Endothelial cell of umbilical vein (primary cell): ENCODE measurements at regions of chr10 and their contacts with region 1.

Region 1: GRCh38 chr10:79068562-79069324 is at the start of gene ZMIZ1:
- DNase-seq: peak; percentile 87
- H3K4me3 ChIP-seq: peak within 1 kb of the TSS; percentile 58 to 81 (median 73)
- H3K27ac ChIP-seq: peak within 1 kb of the TSS; percentile 69
- H3K4me1 ChIP-seq: peaks cover 30% of the 10 kb centered on the region
- H3K27me3 ChIP-seq: no peaks in the 10 kb centered on the region
- CTCF ChIP-seq: peak in 1 of 2 donors; percentile 15
- POLR2A ChIP-seq: peak; percentile 81
- total RNA-seq, gene ZMIZ1: 46.7 and 49.6 TPM in 2 replicates

Region 2: DNA sequence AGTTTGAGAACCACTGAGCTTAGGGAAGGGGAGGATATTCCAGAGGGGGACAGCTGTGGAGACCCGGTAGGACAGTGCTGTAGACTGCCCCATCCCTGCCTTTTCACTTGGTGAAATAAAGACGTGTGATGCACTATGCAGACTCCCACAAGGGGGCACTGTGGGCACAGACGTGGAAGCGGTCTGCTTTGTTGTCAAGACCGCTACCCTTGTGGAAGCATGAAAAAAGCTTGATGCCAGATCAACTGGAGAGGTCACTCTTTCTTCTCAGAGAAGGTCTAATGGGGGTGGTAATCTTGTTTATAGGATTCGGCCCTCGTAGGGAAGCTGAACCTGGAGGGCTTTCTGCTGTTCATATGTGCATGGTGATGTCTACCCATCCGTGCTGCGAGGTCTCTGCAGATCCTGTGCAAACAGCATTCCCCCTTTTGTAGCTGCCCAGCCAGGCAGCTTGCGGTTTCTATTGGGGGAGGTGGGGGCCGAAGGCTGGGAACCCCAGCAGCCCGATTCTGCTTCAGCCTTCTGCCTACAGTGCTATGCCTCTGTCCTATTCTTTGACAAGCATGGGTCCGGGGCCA is 1021.3 kb before region 1 on chr10:
- CTCF ChIA-PET with region 1: interaction called, 9 read pairs
- POLR2A ChIA-PET with region 1: no interaction called
- dilution Hi-C with region 1: no loop called
- intact Hi-C with region 1: loop called (anchors 5 kb)
- DNase-seq: peak; percentile 86
- H3K4me3 ChIP-seq: no peak overlapping the region
- H3K27ac ChIP-seq: no peak overlapping the region
- H3K4me1 ChIP-seq: peaks cover 6% of the 10 kb centered on the region
- H3K27me3 ChIP-seq: no peaks in the 10 kb centered on the region
- CTCF ChIP-seq: peak; percentile 88 to 89
- POLR2A ChIP-seq: no peak

Region 3: DNA sequence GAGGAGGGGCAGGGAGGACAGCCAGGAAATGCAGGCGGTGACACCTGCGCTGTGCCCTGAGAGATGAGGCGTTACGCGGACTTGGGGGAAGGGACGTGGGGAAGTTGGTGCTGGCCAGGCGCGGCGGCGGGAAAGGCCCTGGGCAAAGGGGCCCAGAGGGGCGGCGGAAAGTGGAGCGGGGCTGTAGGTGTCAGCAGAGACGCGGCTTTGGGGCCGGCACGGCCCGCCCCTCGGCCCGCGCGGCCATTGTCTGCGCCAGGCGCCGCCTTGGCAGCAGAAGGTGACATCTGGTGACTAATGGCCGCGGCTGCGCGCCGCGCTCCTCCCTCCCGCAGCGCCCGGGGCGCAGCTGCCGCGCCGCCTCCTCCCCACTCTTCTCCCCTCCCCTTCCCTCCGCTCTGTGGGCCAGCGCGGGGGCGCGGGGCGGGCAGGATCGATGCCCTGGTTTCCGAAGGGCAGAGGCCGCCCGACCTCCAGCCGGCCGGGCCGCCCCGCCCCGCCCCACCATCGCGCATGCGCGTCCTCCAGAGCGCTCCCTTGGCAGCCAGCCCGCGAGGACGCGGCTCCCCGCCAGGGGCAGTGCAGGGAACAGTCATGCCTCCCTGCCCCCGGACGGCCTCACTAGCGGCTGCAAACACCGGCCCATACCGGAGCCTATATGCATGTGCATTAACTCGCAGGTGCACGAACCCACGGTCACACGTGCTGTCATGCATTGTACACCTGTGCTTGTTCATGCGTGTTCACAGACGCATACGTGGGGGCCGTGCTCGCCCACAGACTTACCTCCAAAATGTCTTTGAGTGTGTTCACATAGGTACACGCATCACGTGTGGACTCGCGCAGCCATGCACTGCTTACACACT is 765.5 kb before region 1 on chr10:
- CTCF ChIA-PET with region 1: no interaction called
- POLR2A ChIA-PET with region 1: no interaction called
- dilution Hi-C with region 1: no loop called
- intact Hi-C with region 1: loop called (anchors 1 kb)
- DNase-seq: peak; percentile 97
- H3K4me3 ChIP-seq: peak overlapping the region; percentile 31 to 59 (median 44)
- H3K27ac ChIP-seq: peak overlapping the region; percentile 76
- H3K4me1 ChIP-seq: peaks cover 7% of the 10 kb centered on the region
- H3K27me3 ChIP-seq: peaks cover 8 to 11% of the 10 kb centered on the region in 2 experiments
- CTCF ChIP-seq: peak; percentile 69 to 87
- POLR2A ChIP-seq: peak; percentile 67

Region 4: GRCh38 chr10:78664929-78665553 is 403.7 kb before region 1 on chr10:
- CTCF ChIA-PET with region 1: interaction called, 3 read pairs
- POLR2A ChIA-PET with region 1: no interaction called
- dilution Hi-C with region 1: no loop called
- intact Hi-C with region 1: loop called (anchors 1 kb)
- DNase-seq: peak; percentile 41
- H3K4me3 ChIP-seq: no peak overlapping the region
- H3K27ac ChIP-seq: no peak overlapping the region
- H3K4me1 ChIP-seq: no peaks in the 10 kb centered on the region
- H3K27me3 ChIP-seq: peaks cover 6 to 24% of the 10 kb centered on the region in 2 experiments
- CTCF ChIP-seq: peak; percentile 36 to 46
- POLR2A ChIP-seq: no peak

Region 5: GRCh38 chr10:78937800-78938694 is 130.7 kb before region 1 on chr10:
- CTCF ChIA-PET with region 1: interaction called, 4 read pairs
- POLR2A ChIA-PET with region 1: no interaction called
- dilution Hi-C with region 1: no loop called
- intact Hi-C with region 1: loop called (anchors 1 kb)
- DNase-seq: peak; percentile 83
- H3K4me3 ChIP-seq: no peak overlapping the region
- H3K27ac ChIP-seq: peak overlapping the region; percentile 47
- H3K4me1 ChIP-seq: peaks cover 16% of the 10 kb centered on the region
- H3K27me3 ChIP-seq: no peaks in the 10 kb centered on the region
- CTCF ChIP-seq: peak; percentile 29 to 45
- POLR2A ChIP-seq: no peak

Region 6: GRCh38 chr10:79127151-79127961 is 58.6 kb after region 1 on chr10:
- CTCF ChIA-PET with region 1: interaction called, 5 read pairs
- POLR2A ChIA-PET with region 1: no interaction called
- dilution Hi-C with region 1: no loop called
- intact Hi-C with region 1: loop called (anchors 2 kb)
- DNase-seq: peak; percentile 67
- H3K4me3 ChIP-seq: no peak overlapping the region
- H3K27ac ChIP-seq: peak overlapping the region; percentile 21
- H3K4me1 ChIP-seq: peaks cover 49% of the 10 kb centered on the region
- H3K27me3 ChIP-seq: no peaks in the 10 kb centered on the region
- CTCF ChIP-seq: no peak
- POLR2A ChIP-seq: no peak

Region 7: DNA sequence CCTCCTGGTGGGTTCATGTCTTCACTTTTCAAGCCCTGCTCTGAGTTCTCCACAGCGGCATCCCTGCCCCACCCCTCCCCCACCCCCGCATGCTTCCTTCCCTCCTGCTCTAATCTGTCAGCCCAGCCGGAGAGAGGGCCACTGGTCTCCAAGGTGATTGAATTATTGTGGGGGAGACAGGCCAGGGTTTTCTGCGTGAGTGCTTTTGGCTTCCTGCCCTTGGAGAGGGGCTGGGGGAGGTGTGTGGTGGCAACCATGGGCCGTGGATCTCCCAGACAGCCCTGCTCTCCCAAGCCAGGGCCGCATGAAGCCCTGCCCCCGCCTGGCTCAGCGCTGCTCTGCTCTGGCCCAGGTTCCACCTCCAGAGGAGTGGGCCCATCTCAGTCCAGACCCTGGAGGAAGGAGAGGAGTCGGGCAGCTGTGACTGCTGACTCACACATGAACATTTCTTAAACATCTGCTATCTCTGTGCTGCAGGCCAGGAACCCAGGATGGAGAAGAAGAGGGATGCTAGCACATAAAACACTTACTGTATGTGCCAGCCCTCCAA is 109.9 kb after region 1 on chr10:
- CTCF ChIA-PET with region 1: no interaction called
- POLR2A ChIA-PET with region 1: no interaction called
- dilution Hi-C with region 1: no loop called
- intact Hi-C with region 1: loop called (anchors 5 kb)
- DNase-seq: peak; percentile 93
- H3K4me3 ChIP-seq: no peak overlapping the region
- H3K27ac ChIP-seq: peak overlapping the region; percentile 64
- H3K4me1 ChIP-seq: peaks cover 57% of the 10 kb centered on the region
- H3K27me3 ChIP-seq: no peaks in the 10 kb centered on the region
- CTCF ChIP-seq: no peak
- POLR2A ChIP-seq: no peak